Activated CD4-positive, alpha-beta T cell treated with anti-CD3 and anti-CD28 coated beads for 36 hours (primary cell): ENCODE measurements at regions of chr10 and their contacts with region 1.

Region 1: GRCh38 chr10:62816331-62817120 is at the start of gene EGR2:
- DNase-seq: peak; percentile 96
- ATAC-seq: peak; percentile 77
- H3K4me3 Mint-ChIP-seq: peak within 1 kb of the TSS; percentile 99
- H3K27ac Mint-ChIP-seq: peak within 1 kb of the TSS; percentile 99
- H3K4me1 Mint-ChIP-seq: peaks cover 46% of the 10 kb centered on the region
- H3K27me3 Mint-ChIP-seq: peaks cover 19% of the 10 kb centered on the region
- total RNA-seq, gene EGR2: 46.0 to 53.9 TPM

Region 2: DNA sequence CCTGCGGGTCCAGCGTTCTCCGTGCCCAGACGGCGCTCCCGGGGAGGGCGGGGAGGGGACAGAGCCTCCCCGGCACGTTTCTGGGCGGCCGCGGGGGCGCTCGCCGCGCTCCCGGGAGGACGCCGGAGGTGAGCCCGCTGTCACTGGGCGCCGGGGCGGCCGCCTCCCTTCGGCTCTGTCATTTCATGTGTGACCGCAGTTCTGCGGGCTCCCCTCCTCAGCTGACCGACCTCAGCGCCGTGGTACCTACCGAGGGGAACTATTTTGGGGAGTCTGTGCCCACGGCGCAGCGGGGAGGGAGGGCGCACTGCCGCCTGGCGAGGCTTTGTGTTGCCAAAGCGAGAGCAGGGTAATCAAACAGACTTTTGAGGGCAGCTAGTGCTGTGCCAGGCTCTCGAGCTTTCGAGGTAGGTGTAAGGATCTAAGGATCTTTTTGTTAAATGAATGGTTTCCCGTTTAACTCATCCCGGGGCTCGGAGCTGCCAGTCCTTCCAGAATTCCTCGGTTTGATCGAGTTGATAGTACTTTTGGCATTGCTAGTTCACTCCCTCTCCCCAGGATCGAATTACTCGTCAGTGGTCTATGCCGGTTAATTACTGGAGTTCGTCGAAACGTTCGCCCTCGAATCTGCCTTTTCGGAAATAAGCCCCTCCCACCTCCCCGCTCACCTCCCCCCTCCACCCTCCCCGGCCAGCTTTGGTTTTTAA is 913.2 kb before region 1 on chr10:
- CTCF ChIA-PET with region 1: no interaction called
- POLR2A ChIA-PET with region 1: no interaction called
- intact Hi-C with region 1: loop called (anchors 2 kb)
- DNase-seq: peak; percentile 86
- ATAC-seq: peak; percentile 46
- H3K4me3 Mint-ChIP-seq: peak overlapping the region; percentile 94
- H3K27ac Mint-ChIP-seq: peak overlapping the region; percentile 100
- H3K4me1 Mint-ChIP-seq: peaks cover 40% of the 10 kb centered on the region
- H3K27me3 Mint-ChIP-seq: no peaks in the 10 kb centered on the region

Region 3: GRCh38 chr10:62183442-62183841 is 633.1 kb before region 1 on chr10:
- CTCF ChIA-PET with region 1: interaction called, 3 read pairs
- POLR2A ChIA-PET with region 1: no interaction called
- intact Hi-C with region 1: loop called (anchors 1 to 5 kb)
- DNase-seq: peak; percentile 53
- ATAC-seq: peak; percentile 54
- H3K4me3 Mint-ChIP-seq: peak overlapping the region; percentile 44
- H3K27ac Mint-ChIP-seq: peak overlapping the region; percentile 99
- H3K4me1 Mint-ChIP-seq: peaks cover 89% of the 10 kb centered on the region
- H3K27me3 Mint-ChIP-seq: no peaks in the 10 kb centered on the region

Region 4: DNA sequence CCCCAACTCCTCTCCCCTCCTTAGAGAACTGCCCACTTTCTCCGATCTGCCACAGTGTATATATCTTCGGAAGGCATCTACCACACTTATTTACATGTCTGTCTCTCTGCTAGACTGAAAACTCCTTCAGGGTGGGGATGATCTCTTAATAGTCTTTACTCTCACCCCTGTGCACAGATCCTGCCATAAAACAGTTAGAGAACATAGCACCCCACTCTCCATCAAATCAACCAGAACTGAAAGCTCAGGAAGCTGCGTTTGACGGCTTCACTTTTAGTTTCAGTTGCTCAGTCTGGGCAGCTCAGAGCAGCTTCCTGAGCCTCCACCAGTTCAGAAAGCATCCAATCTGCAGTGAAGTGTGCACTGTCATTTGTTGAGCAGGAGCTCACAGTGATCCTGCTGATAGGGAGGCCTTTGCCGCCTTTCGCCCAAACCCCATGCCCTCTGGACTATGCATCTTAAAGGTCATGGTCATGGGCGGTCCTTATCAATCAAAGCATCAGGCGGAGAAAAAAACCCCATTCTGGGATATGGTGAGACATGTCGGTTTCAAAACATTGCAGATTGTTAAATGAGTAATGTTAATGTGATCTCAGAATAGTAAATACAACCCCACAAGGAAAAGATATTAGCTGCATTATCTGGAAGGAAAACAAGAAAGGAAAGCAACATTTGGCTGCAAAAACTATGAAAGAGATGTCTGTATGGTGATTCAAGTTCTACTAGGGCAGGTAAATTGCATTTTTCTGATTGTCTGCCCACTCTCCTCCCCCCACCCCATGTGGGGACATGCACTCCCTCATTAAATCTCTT is 179.1 kb before region 1 on chr10:
- CTCF ChIA-PET with region 1: interaction called, 7 read pairs
- POLR2A ChIA-PET with region 1: interaction called, 15 read pairs
- intact Hi-C with region 1: loop called (anchors 1 kb)
- DNase-seq: peak; percentile 82
- ATAC-seq: peak; percentile 95
- H3K4me3 Mint-ChIP-seq: no peak overlapping the region
- H3K27ac Mint-ChIP-seq: no peak overlapping the region
- H3K4me1 Mint-ChIP-seq: peaks cover 21% of the 10 kb centered on the region
- H3K27me3 Mint-ChIP-seq: no peaks in the 10 kb centered on the region

Region 5: DNA sequence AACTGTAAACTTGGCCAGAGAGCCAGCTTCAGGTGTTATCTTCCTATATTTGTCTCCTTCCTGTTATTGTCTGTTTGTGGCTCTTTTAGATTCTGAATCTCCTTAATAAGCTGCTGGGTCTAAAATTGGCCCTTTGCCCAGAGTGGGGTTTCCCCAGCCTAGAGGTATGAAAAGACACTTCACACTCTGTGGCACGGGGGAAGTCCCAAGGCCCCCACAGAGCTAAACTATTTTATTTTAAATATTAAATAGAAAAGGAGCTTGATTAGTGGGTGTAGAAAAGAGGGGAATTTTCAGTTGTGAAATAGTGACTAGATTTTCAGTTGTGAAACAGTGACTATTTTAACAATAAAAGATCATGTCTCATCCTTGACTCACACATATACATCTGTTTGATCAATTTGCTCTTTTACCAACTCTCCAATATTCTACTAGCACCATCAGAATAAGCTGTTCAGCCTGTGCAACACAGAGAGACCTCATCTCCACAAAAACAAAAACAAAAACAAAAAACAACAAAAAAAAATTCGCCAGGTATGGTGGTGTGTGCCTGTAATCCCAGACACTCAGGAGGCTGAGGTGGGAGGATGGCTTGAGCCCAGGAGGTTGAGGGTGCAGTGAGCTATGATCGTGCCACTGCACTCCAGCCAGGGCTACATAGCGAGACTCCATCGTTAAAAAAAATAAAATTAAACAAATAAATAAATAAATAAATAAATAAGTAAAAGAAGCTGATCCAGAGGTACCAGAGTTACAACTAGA is 36.9 kb before region 1 on chr10:
- CTCF ChIA-PET with region 1: interaction called, 10 read pairs
- POLR2A ChIA-PET with region 1: interaction called, 7 read pairs
- intact Hi-C with region 1: loop called (anchors 1 kb)
- DNase-seq: peak; percentile 92
- ATAC-seq: peak; percentile 91
- H3K4me3 Mint-ChIP-seq: no peak overlapping the region
- H3K27ac Mint-ChIP-seq: peak overlapping the region; percentile 80
- H3K4me1 Mint-ChIP-seq: peaks cover 34% of the 10 kb centered on the region
- H3K27me3 Mint-ChIP-seq: peaks cover 4% of the 10 kb centered on the region

Region 6: DNA sequence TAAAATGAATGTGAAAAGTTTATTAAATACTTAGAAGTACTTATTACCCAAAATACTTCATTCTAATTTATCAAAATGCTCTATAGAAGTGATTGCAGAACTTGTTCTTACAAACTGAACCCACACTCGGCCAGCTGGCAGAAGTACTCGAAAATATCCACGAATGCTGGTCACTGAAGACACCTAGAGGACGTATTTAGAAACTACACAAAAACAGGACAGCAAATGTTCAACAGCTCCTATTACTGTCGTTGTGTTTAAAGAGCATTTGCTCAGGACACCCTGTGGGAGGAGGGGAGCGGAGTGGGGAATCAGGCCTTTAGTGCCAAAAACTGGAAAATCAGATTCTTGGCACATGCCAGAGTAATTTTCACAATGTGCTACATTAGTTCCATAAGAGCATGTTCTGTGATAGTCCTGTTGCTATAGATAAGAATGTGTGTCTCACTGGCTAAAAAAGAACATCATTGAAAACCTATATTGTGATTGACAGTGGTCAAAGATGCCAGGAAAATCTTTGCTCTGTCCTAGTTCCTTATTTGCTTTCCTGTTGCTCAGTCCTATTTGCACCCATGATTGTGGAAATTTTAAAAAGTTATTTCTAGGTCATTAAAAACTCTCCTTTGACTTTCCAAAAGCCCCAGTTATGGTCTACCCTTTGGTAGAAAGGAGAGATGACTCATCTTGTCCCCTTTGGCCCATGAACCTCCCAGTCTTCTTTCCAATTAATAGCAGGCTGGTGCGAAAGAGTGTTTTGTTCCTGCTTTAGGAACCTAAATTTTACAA is 267.6 kb after region 1 on chr10:
- CTCF ChIA-PET with region 1: interaction called, 4 read pairs
- POLR2A ChIA-PET with region 1: no interaction called
- intact Hi-C with region 1: loop called (anchors 1 to 2 kb)
- DNase-seq: peak; percentile 62
- ATAC-seq: peak; percentile 78
- H3K4me3 Mint-ChIP-seq: no peak overlapping the region
- H3K27ac Mint-ChIP-seq: no peak overlapping the region
- H3K4me1 Mint-ChIP-seq: no peaks in the 10 kb centered on the region
- H3K27me3 Mint-ChIP-seq: peaks cover 17% of the 10 kb centered on the region

Region 7: DNA sequence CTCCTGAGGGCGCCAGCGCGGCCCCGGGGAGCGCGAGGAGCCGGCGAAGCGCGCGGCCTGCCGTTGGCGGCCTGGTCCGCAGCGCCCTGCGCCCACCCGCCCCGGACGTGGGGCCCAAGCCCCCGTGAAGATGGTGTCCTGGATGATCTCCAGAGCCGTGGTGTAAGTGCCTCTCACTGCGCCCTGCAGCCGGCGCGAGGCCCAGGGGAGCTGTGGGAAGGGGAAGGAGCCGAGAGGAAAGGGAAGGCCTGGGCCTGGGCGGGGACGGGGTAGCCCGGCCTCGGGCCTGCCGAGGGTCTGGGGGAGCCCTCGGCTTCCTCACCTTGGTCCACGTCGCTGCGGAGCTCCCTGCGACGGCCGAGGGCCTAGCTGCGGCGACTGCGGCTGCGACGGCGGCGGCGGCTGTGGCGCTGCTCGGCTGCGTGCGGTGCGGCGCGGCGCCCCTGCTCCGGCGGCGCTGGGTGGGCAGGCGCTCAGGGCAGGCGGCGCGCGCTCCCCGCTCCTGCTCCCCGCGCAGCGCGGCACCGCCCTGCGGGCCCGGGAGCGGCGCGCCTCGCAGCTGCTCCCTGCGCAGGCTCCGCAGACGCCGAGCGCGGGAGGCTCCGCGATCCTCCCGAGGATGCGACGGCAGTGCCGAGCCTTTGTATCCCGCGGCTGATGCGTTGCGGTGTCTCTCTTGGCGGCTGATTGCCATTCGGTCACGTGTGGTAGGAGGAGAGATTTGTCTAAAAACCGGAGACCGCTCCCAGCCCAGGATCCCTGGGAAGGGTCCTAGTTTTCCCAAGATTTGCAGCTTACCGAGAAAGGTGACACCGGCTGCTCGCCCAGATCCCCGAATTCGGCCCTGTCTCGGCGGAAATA is 705.1 kb after region 1 on chr10:
- CTCF ChIA-PET with region 1: no interaction called
- POLR2A ChIA-PET with region 1: no interaction called
- intact Hi-C with region 1: loop called in 1 of 2 experiments (anchors 5 kb)
- DNase-seq: peak; percentile 75
- ATAC-seq: peak; percentile 72
- H3K4me3 Mint-ChIP-seq: peak overlapping the region; percentile 86
- H3K27ac Mint-ChIP-seq: peak overlapping the region; percentile 94
- H3K4me1 Mint-ChIP-seq: peaks cover 57% of the 10 kb centered on the region
- H3K27me3 Mint-ChIP-seq: no peaks in the 10 kb centered on the region

Region 8: GRCh38 chr10:63666836-63667383 is 850.4 kb after region 1 on chr10:
- CTCF ChIA-PET with region 1: no interaction called
- POLR2A ChIA-PET with region 1: no interaction called
- intact Hi-C with region 1: no loop called
- DNase-seq: no peak
- ATAC-seq: no peak
- H3K4me3 Mint-ChIP-seq: no peak overlapping the region
- H3K27ac Mint-ChIP-seq: no peak overlapping the region
- H3K4me1 Mint-ChIP-seq: peaks cover 2% of the 10 kb centered on the region
- H3K27me3 Mint-ChIP-seq: no peaks in the 10 kb centered on the region